CD4-positive, alpha-beta memory T cell (primary cell): ENCODE measurements at regions of chr12 and their contacts with region 1.

Region 1: GRCh38 chr12:68113644-68114043 is 45.9 kb downstream of the IFNG start:
- DNase-seq: peak in 4 of 5 donors; percentile 20 to 46 (median 34)
- H3K4me3 ChIP-seq: no peak overlapping the region
- H3K4me3 Mint-ChIP-seq: no peak overlapping the region
- H3K27ac ChIP-seq: no peak overlapping the region
- H3K27ac Mint-ChIP-seq: no peak overlapping the region
- H3K4me1 ChIP-seq: peaks cover 18% of the 10 kb centered on the region
- H3K4me1 Mint-ChIP-seq: peaks cover 14 to 27% (median 20%) of the 10 kb centered on the region in 4 donors
- H3K27me3 ChIP-seq: no peaks in the 10 kb centered on the region
- H3K27me3 Mint-ChIP-seq: peaks cover 0 to 1% of the 10 kb centered on the region in 2 donors

Region 2: DNA sequence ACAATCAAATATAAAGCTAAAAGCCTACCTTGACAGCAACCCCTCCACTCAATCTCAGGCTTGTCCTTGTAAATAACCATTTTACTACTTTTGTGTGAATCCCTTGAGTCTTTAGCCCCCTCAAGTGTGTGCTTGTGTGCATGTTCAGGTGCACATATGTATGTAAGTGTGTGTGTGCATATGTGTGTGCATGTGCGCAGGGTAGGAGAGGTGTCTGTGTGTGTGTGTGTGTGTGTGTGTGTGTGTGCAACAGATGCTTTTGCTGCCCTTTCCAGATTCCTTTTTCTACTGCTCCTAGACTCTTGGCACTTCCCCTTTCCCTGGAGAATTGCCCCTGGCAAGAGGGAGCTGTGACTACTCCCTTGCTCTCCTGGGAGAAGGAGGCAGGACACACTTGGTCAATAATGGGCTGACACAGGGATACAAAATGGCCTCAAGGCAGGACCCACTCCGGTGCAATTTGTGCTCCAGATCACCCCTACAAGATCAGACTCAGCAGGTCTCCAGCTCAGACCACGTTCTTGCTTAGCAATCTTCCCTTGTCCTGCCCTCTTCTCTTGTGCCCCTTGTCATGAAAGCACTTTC is 27.5 kb before region 1 on chr12:
- CTCF ChIA-PET with region 1: no interaction called
- POLR2A ChIA-PET with region 1: no interaction called
- intact Hi-C with region 1: no loop called
- DNase-seq: no peak
- H3K4me3 ChIP-seq: no peak overlapping the region
- H3K4me3 Mint-ChIP-seq: no peak overlapping the region
- H3K27ac ChIP-seq: no peak overlapping the region
- H3K27ac Mint-ChIP-seq: no peak overlapping the region
- H3K4me1 ChIP-seq: no peaks in the 10 kb centered on the region
- H3K4me1 Mint-ChIP-seq: no peaks in the 10 kb centered on the region
- H3K27me3 ChIP-seq: no peaks in the 10 kb centered on the region
- H3K27me3 Mint-ChIP-seq: no peaks in the 10 kb centered on the region

Region 3: DNA sequence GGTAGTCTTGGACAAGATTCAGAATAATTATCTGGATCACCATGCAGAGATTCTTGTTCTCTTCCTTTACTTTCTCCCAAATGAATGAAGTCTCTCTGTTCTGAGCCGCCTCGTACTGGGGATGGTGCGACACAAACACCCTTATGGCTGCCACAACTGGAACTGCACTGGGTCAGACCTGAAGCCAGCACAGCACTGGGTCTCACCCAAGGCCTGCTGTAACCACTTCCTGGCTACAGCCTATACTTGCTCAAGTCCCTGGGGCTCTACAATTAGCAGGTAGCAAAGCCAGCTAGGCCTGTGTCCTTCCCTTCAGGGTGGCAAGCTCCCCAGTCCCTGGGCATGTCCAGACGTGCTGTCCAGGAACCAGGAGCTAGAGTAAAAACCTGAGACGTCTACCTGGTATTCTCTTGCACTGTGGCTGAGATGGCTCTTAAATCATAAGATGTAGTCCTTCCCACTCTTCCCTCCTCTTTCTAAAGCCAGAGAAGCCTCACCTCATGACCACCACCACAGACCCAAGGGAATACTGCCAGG is 18.3 kb after region 1 on chr12:
- CTCF ChIA-PET with region 1: interaction called, 11 read pairs
- POLR2A ChIA-PET with region 1: interaction called, 3 read pairs
- intact Hi-C with region 1: no loop called
- DNase-seq: no peak
- H3K4me3 ChIP-seq: no peak overlapping the region
- H3K4me3 Mint-ChIP-seq: no peak overlapping the region
- H3K27ac ChIP-seq: no peak overlapping the region
- H3K27ac Mint-ChIP-seq: no peak overlapping the region
- H3K4me1 ChIP-seq: peaks cover 10% of the 10 kb centered on the region
- H3K4me1 Mint-ChIP-seq: peaks cover 13 to 26% (median 19%) of the 10 kb centered on the region in 4 donors
- H3K27me3 ChIP-seq: no peaks in the 10 kb centered on the region
- H3K27me3 Mint-ChIP-seq: no peaks in the 10 kb centered on the region